Right lobe of liver (tissue), 6 donors: ENCODE measurements at regions of chr2 and their contacts with region 1.

Region 1: GRCh38 chr2:44955593-44956392 is 14.3 kb downstream of the SIX3 start:
- DNase-seq: peak; percentile 74 to 81 (median 78)
- ATAC-seq: peak; percentile 85 to 91 (median 90)
- H3K4me3 ChIP-seq: peak overlapping the region in 1 of 3 donors; percentile 3
- H3K27ac ChIP-seq: no peak overlapping the region
- H3K4me1 ChIP-seq: peaks cover 0 to 25% (median 2%) of the 10 kb centered on the region in 4 donors
- H3K27me3 ChIP-seq: peaks cover 0 to 13% of the 10 kb centered on the region in 2 donors
- CTCF ChIP-seq: peak; percentile 78 to 96 (median 90)
- POLR2A ChIP-seq: no peak

Region 2: GRCh38 chr2:44392338-44392943 is 563.4 kb before region 1 on chr2:
- intact Hi-C with region 1: loop called (anchors 10 kb)
- DNase-seq: peak in 2 of 3 donors; percentile 23 to 54
- ATAC-seq: peak in 1 of 4 donors; percentile 44
- H3K4me3 ChIP-seq: no peak overlapping the region
- H3K27ac ChIP-seq: no peak overlapping the region
- H3K4me1 ChIP-seq: no peaks in the 10 kb centered on the region
- H3K27me3 ChIP-seq: no peaks in the 10 kb centered on the region
- CTCF ChIP-seq: peak; percentile 51 to 72 (median 62)
- POLR2A ChIP-seq: no peak

Region 3: DNA sequence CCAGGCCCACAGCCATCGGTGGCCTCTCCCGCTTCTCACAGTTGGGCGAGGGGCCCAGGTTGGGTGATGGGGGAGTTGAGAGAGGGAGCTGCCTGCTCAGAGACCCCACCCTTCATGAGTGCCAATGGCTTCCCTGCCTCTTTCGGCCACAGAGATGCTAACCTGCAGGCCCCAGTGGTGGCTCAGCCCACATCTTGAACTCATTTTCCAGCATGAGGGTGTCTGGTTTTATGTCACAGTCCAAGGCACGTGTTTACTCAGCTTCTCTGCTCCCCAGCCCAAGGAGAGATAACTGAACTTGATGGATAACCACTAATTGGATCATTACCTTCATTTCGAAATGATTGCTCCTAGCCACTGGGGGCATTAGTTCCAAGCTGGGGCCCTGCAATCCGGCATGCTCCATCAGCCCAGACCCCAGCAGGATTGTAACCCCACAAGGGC is 99.4 kb after region 1 on chr2:
- intact Hi-C with region 1: no loop called
- DNase-seq: no peak
- ATAC-seq: no peak
- H3K4me3 ChIP-seq: no peak overlapping the region
- H3K27ac ChIP-seq: no peak overlapping the region
- H3K4me1 ChIP-seq: no peaks in the 10 kb centered on the region
- H3K27me3 ChIP-seq: no peaks in the 10 kb centered on the region
- CTCF ChIP-seq: no peak
- POLR2A ChIP-seq: no peak

Region 4: DNA sequence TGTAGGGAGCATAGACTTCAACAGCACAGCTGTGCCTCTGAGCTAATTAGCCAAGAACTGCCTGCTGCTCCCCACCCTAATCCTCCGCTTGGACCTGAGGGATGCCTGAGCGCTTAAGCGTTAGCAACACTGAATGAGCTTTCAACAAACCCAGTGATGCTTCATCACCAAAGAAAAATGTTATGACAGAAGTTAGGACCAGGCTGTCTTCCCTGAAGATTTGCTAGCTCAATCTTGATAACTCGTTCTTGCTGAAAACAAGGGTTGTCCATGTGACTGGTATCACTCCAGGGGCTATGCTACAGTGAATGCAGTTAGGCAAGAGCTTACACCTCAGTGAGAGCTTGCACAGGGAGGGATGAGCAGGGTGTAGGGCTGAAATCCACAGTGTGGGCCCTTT is 244.2 kb after region 1 on chr2:
- intact Hi-C with region 1: no loop called
- DNase-seq: no peak
- ATAC-seq: no peak
- H3K4me3 ChIP-seq: no peak overlapping the region
- H3K27ac ChIP-seq: no peak overlapping the region
- H3K4me1 ChIP-seq: no peaks in the 10 kb centered on the region
- H3K27me3 ChIP-seq: no peaks in the 10 kb centered on the region
- CTCF ChIP-seq: no peak
- POLR2A ChIP-seq: no peak